ENCODE measurements at regions of chr13 and their contacts with region 1.

Region 1: GRCh38 chr13:30802953-30803478 is 67.7 kb downstream of the ALOX5AP start:
- DNase-seq: peak; percentile 60
- ATAC-seq: peak; percentile 92
- H3K4me3 ChIP-seq: no peak overlapping the region
- H3K27ac ChIP-seq: no peak overlapping the region
- H3K4me1 ChIP-seq: peaks cover 26 to 47% of the 10 kb centered on the region in 2 experiments
- H3K27me3 ChIP-seq: no peaks in the 10 kb centered on the region
- CTCF ChIP-seq: peak; percentile 68 to 89 (median 87)
- POLR2A ChIP-seq: no peak
- RAD21 ChIP-seq: peak; percentile 95

Region 2: GRCh38 chr13:30132623-30133553 is 670.1 kb before region 1 on chr13:
- CTCF ChIA-PET with region 1: interaction called, 6 read pairs
- POLR2A ChIA-PET with region 1: no interaction called
- RAD21 ChIA-PET with region 1: no interaction called
- intact Hi-C with region 1: loop called (anchors 5 kb)
- DNase-seq: peak; percentile 78
- ATAC-seq: peak; percentile 100
- H3K4me3 ChIP-seq: no peak overlapping the region
- H3K27ac ChIP-seq: no peak overlapping the region; the same call in 1 of the 2 replicates
- H3K4me1 ChIP-seq: peaks cover 0 to 7% of the 10 kb centered on the region in 2 experiments; a peak in 2 of 4 replicates
- H3K27me3 ChIP-seq: no peaks in the 10 kb centered on the region
- CTCF ChIP-seq: peak; percentile 85 to 91 (median 88)
- POLR2A ChIP-seq: no peak
- RAD21 ChIP-seq: peak; percentile 94

Region 3: DNA sequence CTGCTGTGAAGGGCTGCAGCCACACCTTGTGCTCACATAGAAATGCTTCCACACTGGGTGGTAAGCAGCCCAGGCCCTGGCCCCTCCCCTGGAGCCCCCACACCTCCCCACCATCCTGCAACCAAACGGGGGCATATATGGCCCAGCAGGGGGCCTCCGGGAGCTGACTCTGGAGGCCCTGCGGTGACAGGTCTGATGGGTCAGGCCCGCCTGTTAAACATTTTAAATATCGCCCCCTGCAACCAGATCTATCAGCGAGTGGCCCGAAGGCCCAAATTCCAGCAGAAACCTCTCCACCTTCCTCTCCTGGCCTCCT is 447.7 kb before region 1 on chr13:
- CTCF ChIA-PET with region 1: no interaction called
- POLR2A ChIA-PET with region 1: no interaction called
- RAD21 ChIA-PET with region 1: no interaction called
- intact Hi-C with region 1: no loop called
- DNase-seq: no peak
- ATAC-seq: peak; percentile 62
- H3K4me3 ChIP-seq: no peak overlapping the region
- H3K27ac ChIP-seq: no peak overlapping the region
- H3K4me1 ChIP-seq: no peaks in the 10 kb centered on the region
- H3K27me3 ChIP-seq: no peaks in the 10 kb centered on the region
- CTCF ChIP-seq: no peak
- POLR2A ChIP-seq: no peak
- RAD21 ChIP-seq: peak; percentile 22; the same call in 1 of the 2 replicates

Region 4: GRCh38 chr13:30465585-30466357 is 337.2 kb before region 1 on chr13 and contains the start of gene HMGB1:
- CTCF ChIA-PET with region 1: no interaction called
- POLR2A ChIA-PET with region 1: no interaction called
- RAD21 ChIA-PET with region 1: no interaction called
- intact Hi-C with region 1: loop called (anchors 5 kb)
- DNase-seq: peak; percentile 98
- ATAC-seq: peak; percentile 90
- H3K4me3 ChIP-seq: peak within 1 kb of the TSS; percentile 73 to 80
- H3K27ac ChIP-seq: peak within 1 kb of the TSS; percentile 99
- H3K4me1 ChIP-seq: peaks cover 11 to 32% of the 10 kb centered on the region in 2 experiments; a peak in 3 of 4 replicates
- H3K27me3 ChIP-seq: no peaks in the 10 kb centered on the region
- CTCF ChIP-seq: no peak
- POLR2A ChIP-seq: peak; percentile 77
- RAD21 ChIP-seq: no peak
- total RNA-seq, gene HMGB1: 678 TPM

Region 5: DNA sequence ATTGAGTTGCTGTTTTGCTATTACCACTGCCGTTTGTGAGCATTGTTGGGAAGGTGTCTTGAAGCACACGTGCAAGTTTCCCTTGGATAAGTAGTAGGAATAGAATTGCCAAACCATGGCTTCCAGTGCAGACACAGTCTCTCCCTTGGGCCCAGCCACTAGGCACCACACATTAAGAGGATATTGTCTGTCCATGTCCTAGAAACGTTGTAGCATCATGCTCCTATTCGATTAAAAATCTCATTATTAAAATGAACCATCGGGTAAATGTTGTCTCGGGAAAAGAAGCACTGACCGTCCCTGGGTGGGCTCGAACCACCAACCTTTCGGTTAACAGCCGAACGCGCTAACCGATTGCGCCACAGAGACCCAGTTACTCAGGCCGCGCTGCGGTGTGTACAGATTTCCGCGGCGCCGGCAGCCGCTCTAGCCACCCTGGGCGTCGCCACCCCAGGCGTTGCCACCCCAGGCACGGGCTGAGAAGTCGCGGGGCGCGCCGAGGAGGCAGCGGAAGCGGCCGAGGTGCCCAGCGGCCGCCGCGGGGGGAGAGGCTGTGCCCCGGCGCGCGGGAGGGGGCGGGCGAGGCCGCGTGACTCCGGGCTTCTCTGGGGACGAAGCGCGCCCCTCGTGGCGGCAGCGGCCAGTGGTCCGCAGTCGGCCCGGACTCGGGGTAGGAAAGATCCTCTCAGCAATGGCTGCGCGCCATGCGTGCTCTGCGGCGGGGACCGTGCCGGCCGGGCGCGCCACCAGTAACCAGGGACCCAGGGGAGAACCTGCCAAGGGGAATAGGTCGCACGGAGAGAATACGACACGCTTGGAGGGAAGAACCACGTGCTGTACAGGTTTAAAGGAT is 129.1 kb before region 1 on chr13:
- CTCF ChIA-PET with region 1: interaction called, 4 read pairs
- POLR2A ChIA-PET with region 1: no interaction called
- RAD21 ChIA-PET with region 1: no interaction called
- intact Hi-C with region 1: loop called (anchors 2 kb)
- DNase-seq: peak; percentile 59
- ATAC-seq: peak; percentile 92
- H3K4me3 ChIP-seq: peak overlapping the region; percentile 13 to 44; a peak in 3 of 4 replicates
- H3K27ac ChIP-seq: peak overlapping the region; percentile 1; the same call in 1 of the 2 replicates
- H3K4me1 ChIP-seq: peaks cover 0 to 15% of the 10 kb centered on the region in 2 experiments; a peak in 2 of 4 replicates
- H3K27me3 ChIP-seq: no peaks in the 10 kb centered on the region
- CTCF ChIP-seq: peak in 2 of 3 experiments; percentile 58 to 64; a peak in 4 of 6 replicates
- POLR2A ChIP-seq: peak; percentile 37
- RAD21 ChIP-seq: no peak

Region 6: DNA sequence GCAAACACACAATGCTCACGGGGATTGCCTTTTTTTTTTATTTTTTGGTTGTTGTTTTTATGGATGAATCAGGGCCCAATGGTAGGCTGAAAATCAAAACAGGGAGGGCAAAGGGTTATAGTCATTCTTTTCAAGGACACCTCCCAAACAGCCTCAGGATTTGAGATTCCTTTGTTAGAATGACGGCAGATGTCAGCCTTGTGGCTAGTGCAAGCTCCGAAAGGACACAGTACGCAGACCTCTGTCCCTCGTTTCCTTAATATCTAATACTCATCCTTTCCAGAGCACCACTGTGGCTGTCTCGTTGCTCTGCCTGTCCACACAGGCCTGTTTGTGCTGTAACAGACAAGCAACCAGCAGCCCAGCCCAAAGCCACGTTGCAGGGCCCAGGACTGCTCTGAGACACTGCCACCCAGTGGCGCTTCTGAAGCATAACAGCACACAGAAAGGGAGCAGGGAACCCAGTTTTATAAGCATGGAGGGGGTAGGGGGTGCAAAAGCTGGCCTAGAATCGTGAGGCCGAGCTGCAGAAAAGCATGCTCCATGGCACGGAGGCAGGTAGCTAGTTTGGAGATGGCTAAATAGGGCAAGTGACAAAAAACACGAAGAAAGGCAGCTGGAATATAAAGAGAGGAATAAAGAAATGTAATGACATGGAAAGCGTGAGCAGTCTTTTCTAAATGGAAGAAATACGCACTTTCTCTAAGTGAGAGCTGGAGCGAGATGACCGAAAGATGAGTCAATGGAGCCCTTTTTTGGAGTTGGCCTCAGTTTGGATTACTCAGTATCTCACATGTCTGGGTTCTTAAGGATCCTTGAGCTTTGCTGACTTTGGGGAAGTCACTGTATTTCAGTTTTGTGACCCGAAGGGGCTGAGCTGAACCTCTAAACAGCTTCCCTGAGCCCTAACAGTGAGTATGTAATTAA is 62.4 kb after region 1 on chr13:
- CTCF ChIA-PET with region 1: interaction called, 46 read pairs
- POLR2A ChIA-PET with region 1: interaction called, 4 read pairs
- RAD21 ChIA-PET with region 1: interaction called, 6 to 16 read pairs
- intact Hi-C with region 1: loop called (anchors 1 kb)
- DNase-seq: peak; percentile 78
- ATAC-seq: peak; percentile 93
- H3K4me3 ChIP-seq: no peak overlapping the region
- H3K27ac ChIP-seq: peak overlapping the region; percentile 23; the same call in 1 of the 2 replicates
- H3K4me1 ChIP-seq: peaks cover 15 to 30% of the 10 kb centered on the region in 2 experiments
- H3K27me3 ChIP-seq: no peaks in the 10 kb centered on the region
- CTCF ChIP-seq: peak; percentile 82 to 97 (median 93)
- POLR2A ChIP-seq: no peak
- RAD21 ChIP-seq: peak; percentile 95

Region 7: GRCh38 chr13:30943881-30944280 is 140.9 kb after region 1 on chr13:
- CTCF ChIA-PET with region 1: no interaction called
- POLR2A ChIA-PET with region 1: no interaction called
- RAD21 ChIA-PET with region 1: no interaction called
- intact Hi-C with region 1: no loop called
- DNase-seq: no peak
- ATAC-seq: no peak
- H3K4me3 ChIP-seq: no peak overlapping the region
- H3K27ac ChIP-seq: no peak overlapping the region
- H3K4me1 ChIP-seq: no peaks in the 10 kb centered on the region
- H3K27me3 ChIP-seq: no peaks in the 10 kb centered on the region
- CTCF ChIP-seq: no peak
- POLR2A ChIP-seq: no peak
- RAD21 ChIP-seq: no peak

Region 8: GRCh38 chr13:30998136-30999088 is 195.4 kb after region 1 on chr13:
- CTCF ChIA-PET with region 1: no interaction called
- POLR2A ChIA-PET with region 1: no interaction called
- RAD21 ChIA-PET with region 1: no interaction called
- intact Hi-C with region 1: no loop called
- DNase-seq: no peak
- ATAC-seq: no peak
- H3K4me3 ChIP-seq: no peak overlapping the region
- H3K27ac ChIP-seq: no peak overlapping the region
- H3K4me1 ChIP-seq: peaks cover 3 to 5% of the 10 kb centered on the region in 2 experiments; a peak in 2 of 4 replicates
- H3K27me3 ChIP-seq: no peaks in the 10 kb centered on the region
- CTCF ChIP-seq: no peak
- POLR2A ChIP-seq: no peak
- RAD21 ChIP-seq: no peak

Region 9: DNA sequence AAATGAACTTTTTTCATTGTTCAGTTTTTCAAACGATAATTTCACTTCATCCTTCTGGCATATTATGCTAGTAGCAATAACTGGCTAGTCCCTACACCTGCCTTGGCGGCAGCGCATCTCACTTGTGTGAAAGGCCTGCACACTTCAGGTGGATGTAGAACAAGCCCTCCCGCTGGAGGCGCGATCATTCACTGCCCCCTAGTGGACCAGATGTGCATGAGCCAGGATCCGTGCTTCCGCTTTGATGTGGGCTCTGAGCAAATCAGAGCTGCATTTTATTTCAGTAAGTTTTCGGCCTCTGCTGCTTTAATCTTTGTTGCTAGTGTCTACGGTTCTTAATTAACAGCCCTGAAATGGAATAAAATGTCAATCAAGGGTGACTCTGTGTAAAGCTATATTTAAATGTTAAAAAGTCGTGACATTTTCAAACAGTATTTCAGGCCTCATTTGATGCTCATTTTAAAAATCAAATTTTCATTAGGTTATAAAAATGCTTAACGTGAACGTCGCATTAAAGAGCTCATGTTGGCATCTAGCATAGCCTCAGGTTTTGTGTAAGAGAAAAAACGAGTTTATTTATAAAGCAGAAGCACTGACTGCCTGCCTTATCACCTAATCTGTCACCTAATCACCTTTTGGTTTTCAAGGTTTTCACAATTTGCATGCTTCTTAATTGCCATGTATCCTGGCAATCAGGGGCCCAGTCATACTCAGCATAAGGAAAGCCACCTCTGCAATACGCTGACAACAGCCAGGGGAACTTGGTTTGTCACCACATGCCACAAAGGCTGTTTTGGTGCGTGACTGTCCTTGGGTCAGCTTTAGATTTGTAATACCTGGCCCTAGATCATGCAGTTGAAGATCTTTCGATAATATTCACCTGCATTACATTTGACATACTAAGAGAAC is 241.6 kb after region 1 on chr13:
- CTCF ChIA-PET with region 1: interaction called, 45 read pairs
- POLR2A ChIA-PET with region 1: interaction called, 3 read pairs
- RAD21 ChIA-PET with region 1: no interaction called
- intact Hi-C with region 1: loop called (anchors 2 kb)
- DNase-seq: peak; percentile 78
- ATAC-seq: peak; percentile 75
- H3K4me3 ChIP-seq: peak overlapping the region in 1 of 2 experiments; percentile 56; a peak in 3 of 4 replicates
- H3K27ac ChIP-seq: peak overlapping the region; percentile 98
- H3K4me1 ChIP-seq: peaks cover 28 to 55% of the 10 kb centered on the region in 2 experiments
- H3K27me3 ChIP-seq: no peaks in the 10 kb centered on the region
- CTCF ChIP-seq: peak in 2 of 3 experiments; percentile 95 to 97; a peak in 4 of 6 replicates
- POLR2A ChIP-seq: no peak
- RAD21 ChIP-seq: no peak